BJ (cell line): ENCODE measurements at regions of chr12 and their contacts with region 1.

Region 1: GRCh38 chr12:52258335-52258901 is 16.0 kb upstream of the KRT86 start:
- DNase-seq: no peak
- H3K4me3 ChIP-seq: no peak overlapping the region
- H3K27me3 ChIP-seq: peaks cover 4% of the 10 kb centered on the region
- CTCF ChIP-seq: 0 out of 2 replicates have a peak, but pooled peaks have one; percentile 2

Region 2: DNA sequence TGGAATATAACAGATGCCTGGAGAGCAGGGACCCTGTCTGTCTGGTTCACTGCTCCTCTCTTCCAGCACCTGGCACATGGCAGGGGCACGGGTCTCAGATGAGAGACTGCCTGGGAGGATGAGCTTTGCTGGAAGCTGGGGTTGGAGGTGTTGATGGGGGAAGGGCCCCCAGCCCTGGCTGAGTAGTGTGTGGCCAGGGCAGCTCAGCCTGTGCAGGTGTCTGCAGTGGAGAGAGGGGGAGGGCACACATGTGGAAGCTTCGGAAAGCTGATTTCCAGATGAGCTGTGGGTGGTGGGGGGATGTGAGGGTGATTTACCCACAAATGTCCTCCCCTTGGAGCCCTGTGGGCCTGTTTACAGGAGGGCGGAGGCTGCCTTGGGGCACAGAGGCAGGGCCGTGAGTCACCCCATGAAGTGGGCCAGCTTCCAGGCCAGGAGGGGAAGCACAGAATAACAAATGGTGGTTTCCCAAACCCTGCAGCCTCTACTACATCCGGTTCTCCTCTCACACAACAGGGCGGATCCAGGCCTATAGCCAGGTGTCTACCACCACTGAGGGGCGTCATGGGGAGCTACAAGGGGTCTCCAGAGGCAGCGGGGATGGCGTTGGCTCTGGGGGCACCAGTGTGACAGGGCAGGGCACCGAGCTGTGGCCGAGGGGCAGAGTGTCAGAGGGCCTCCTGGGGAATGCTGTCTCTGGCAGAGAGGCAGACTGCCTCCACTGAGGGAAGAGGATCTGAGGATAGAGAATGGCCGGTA is 14.4 kb before region 1 on chr12:
- CTCF ChIA-PET with region 1: interaction called, 11 read pairs
- POLR2A ChIA-PET with region 1: no interaction called
- DNase-seq: peak; percentile 90
- H3K4me3 ChIP-seq: no peak overlapping the region
- H3K27me3 ChIP-seq: no peaks in the 10 kb centered on the region
- CTCF ChIP-seq: no peak